ENCODE measurements at regions of chr3 and their contacts with region 1.

Region 1: DNA sequence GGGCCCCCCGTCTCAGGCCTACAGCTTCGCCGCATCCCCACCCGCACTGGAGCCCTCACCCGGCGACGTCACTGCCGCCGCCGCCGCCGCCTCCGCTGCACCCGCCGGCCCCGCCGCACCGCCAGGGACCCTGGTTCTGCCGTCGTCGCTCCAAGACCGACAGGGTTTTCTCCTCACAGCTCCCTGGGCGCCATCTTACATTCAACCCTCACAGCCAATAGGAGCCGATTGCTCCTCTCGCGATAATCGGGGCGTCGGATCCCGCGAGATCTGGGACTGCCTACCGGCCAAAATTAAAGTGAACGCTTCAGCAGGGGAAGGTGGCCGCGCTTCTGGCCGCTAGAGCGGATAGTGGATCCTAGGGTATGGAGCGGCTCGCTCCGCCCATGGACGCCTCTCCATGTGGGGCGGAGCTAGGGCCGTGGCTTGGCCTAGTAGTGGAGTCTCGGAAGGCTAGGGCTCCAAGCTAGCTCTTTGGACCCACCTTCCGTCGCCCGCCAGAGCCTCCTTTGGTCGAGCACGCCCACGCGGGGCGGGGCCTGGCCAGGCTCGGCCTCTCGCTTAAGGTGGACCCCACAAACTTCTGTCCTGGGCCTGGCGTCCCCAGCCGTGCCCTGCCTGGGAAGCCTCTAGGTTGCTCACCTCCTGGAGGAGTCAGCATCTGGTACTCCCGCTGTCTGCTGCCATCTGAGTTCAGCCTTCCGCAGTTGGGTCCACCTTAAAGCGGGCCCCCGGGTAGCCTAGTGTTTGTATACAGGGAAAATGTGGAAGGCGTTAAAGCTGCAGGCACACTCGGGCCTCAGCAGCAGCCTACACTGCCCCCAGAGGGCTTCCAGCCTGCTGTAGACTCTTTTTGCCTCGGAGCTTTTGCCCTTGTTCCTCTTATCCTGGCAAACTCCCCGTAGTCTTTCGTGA is at the start of gene QRICH1:
- DNase-seq: peak; percentile 92
- H3K4me3 ChIP-seq: peak within 1 kb of the TSS; percentile 76 to 98
- H3K27ac ChIP-seq: peak within 1 kb of the TSS; percentile 95 to 96
- H3K4me1 ChIP-seq: peaks cover 15 to 23% of the 10 kb centered on the region in 2 experiments; a peak in 3 of 4 replicates
- H3K27me3 ChIP-seq: no peaks in the 10 kb centered on the region
- CTCF ChIP-seq: peak; percentile 66
- EP300 ChIP-seq: no peak
- RAD21 ChIP-seq: peak; percentile 51
- polyA plus RNA-seq, gene QRICH1: 58.5 and 67.0 TPM in 2 replicates

Region 2: DNA sequence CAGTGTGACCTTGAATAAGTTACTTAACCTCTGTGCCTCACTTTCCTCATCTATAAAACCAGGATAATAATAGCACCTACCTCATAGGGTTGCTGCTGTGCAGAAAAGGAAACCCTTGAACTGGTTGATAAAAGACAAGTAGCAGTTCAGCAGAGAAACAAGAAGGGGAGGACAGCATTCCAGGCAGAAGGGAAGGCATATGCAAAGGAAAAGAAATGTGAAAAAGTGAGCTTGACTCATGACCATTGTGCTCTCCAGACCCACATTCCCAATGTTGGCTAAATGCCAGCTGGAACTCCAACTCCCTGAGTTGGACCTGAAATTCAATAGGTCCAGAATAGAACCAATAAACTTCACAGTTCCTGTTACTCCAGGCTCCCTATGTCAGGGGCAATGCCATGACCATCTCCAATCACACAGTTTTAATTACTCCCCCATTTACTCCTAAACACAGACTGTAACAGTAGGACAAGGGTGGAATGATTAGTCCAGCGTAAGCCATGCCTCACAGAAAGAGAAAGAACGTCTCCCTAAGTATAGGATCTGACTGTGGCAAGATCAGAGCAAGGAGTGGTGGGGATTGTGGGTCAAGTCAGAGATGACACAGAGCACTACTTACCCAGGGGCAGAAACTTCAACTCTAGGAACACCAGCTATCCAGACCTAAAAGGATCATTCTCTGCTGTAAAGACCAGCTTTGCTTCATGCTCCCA is 273.3 kb before region 1 on chr3:
- CTCF ChIA-PET with region 1: no interaction called
- POLR2A ChIA-PET with region 1: no interaction called
- DNase-seq: no peak
- H3K4me3 ChIP-seq: no peak overlapping the region
- H3K27ac ChIP-seq: peak overlapping the region in 1 of 2 experiments; percentile 9; a peak in 1 of 4 replicates
- H3K4me1 ChIP-seq: 0 out of 4 replicates have a peak, but pooled peaks cover 0 to 7% of the 10 kb centered on the region in 2 experiments
- H3K27me3 ChIP-seq: no peaks in the 10 kb centered on the region
- CTCF ChIP-seq: no peak
- EP300 ChIP-seq: no peak
- RAD21 ChIP-seq: no peak

Region 3: DNA sequence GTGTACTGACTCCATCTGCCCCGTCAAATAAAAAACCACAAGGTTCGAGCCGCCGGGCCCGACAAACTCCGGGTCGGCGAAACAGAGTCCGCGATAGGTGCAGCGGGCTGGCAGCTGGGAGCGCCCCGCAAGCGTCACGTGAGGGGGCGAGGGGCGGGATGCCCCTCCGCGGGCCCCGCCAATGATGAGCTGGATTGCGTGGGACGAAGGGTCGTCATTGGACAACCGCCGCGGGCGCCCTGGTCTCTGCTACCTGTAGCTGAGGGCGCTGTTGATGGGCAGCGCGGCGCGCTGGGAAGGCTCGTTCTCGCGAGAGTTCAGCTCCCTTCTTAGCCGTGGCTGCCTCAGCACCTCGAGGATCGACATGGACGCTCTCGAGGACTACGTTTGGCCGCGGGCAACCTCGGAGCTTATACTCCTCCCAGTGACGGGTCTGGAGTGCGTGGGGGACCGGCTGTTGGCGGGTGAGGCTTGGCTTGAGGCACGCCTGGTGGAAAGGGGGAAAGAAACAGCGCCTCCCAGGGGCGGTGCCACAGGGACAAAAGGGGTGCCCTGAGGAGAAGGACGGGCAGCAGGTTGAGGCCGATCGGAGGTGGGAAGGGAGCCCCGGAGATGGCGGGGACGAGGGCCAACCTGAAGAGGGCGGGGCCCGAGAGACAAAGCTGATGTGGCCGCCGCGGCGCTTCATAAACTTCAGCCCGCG is 86.9 kb before region 1 on chr3 and contains the start of gene WDR6:
- CTCF ChIA-PET with region 1: interaction called, 3 read pairs
- POLR2A ChIA-PET with region 1: interaction called, 13 read pairs
- DNase-seq: peak; percentile 98
- H3K4me3 ChIP-seq: peak within 1 kb of the TSS; percentile 78 to 97
- H3K27ac ChIP-seq: peak within 1 kb of the TSS; percentile 96 to 98
- H3K4me1 ChIP-seq: peaks cover 0 to 21% of the 10 kb centered on the region in 2 experiments; a peak in 2 of 4 replicates
- H3K27me3 ChIP-seq: no peaks in the 10 kb centered on the region
- CTCF ChIP-seq: peak; percentile 60
- EP300 ChIP-seq: no peak
- RAD21 ChIP-seq: no peak
- polyA plus RNA-seq, gene WDR6: 230 and 277 TPM in 2 replicates

Region 4: GRCh38 chr3:49028673-49029562 is 65.2 kb before region 1 on chr3 and contains the start of gene IMPDH2:
- CTCF ChIA-PET with region 1: no interaction called
- POLR2A ChIA-PET with region 1: interaction called, 16 read pairs
- DNase-seq: peak; percentile 92
- H3K4me3 ChIP-seq: peak within 1 kb of the TSS; percentile 83 to 87
- H3K27ac ChIP-seq: peak within 1 kb of the TSS; percentile 69 to 82
- H3K4me1 ChIP-seq: peaks cover 10 to 32% of the 10 kb centered on the region in 2 experiments; a peak in 3 of 4 replicates
- H3K27me3 ChIP-seq: no peaks in the 10 kb centered on the region
- CTCF ChIP-seq: 0 out of 2 replicates have a peak, but pooled peaks have one; percentile 11
- EP300 ChIP-seq: no peak
- RAD21 ChIP-seq: no peak
- polyA plus RNA-seq, gene IMPDH2: 305 and 346 TPM in 2 replicates

Region 5: DNA sequence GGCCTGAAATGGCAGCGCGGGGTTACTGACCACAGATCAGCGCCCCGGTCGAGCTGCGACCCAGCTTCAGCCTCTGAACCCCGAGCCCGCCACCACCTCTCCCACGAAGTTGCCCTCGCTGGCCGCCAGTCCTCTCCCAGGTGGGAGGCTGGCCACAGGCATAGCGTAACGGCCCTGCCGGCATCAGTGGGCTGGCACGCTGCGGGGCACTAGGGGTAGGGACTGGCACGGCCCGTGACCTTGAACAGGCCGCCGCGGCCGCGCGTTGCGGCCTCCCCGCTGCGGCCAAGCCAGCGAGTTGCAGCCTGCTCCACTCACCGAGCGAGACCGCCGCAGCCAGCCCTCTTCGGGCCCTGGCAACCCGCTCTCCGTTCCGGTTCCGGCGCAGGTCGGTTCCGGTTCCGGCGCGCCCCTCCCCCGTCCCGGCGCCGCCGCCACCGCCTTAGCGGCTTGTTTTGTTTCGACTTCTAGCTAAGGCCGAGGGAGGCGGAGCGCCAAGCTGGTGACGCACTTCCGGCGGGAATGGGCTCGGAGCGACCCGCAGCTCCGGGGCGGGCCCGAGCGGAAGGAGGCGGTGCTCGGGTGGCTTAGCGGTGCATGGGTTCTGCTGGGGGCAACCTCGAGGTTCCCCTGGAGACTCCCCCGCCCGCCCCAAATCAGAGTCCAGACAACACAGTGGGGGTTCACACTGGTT is 26.5 kb after region 1 on chr3 and contains the start of gene USP19:
- CTCF ChIA-PET with region 1: interaction called, 6 read pairs
- POLR2A ChIA-PET with region 1: interaction called, 25 read pairs
- DNase-seq: peak; percentile 99
- H3K4me3 ChIP-seq: peak within 1 kb of the TSS; percentile 95 to 100
- H3K27ac ChIP-seq: peak within 1 kb of the TSS; percentile 96 to 98
- H3K4me1 ChIP-seq: peaks cover 7 to 19% of the 10 kb centered on the region in 2 experiments; a peak in 2 of 4 replicates
- H3K27me3 ChIP-seq: no peaks in the 10 kb centered on the region
- CTCF ChIP-seq: no peak
- EP300 ChIP-seq: no peak; a peak in 1 of 4 replicates
- RAD21 ChIP-seq: no peak
- polyA plus RNA-seq, gene USP19: 75.6 and 80.5 TPM in 2 replicates

Region 6: GRCh38 chr3:49238274-49239127 is 144.4 kb after region 1 on chr3:
- CTCF ChIA-PET with region 1: no interaction called
- POLR2A ChIA-PET with region 1: no interaction called
- DNase-seq: no peak
- H3K4me3 ChIP-seq: no peak overlapping the region
- H3K27ac ChIP-seq: no peak overlapping the region
- H3K4me1 ChIP-seq: no peaks in the 10 kb centered on the region
- H3K27me3 ChIP-seq: no peaks in the 10 kb centered on the region
- CTCF ChIP-seq: no peak
- EP300 ChIP-seq: no peak
- RAD21 ChIP-seq: no peak